ENCODE measurements at regions of chr1 and their contacts with region 1.

Region 1: DNA sequence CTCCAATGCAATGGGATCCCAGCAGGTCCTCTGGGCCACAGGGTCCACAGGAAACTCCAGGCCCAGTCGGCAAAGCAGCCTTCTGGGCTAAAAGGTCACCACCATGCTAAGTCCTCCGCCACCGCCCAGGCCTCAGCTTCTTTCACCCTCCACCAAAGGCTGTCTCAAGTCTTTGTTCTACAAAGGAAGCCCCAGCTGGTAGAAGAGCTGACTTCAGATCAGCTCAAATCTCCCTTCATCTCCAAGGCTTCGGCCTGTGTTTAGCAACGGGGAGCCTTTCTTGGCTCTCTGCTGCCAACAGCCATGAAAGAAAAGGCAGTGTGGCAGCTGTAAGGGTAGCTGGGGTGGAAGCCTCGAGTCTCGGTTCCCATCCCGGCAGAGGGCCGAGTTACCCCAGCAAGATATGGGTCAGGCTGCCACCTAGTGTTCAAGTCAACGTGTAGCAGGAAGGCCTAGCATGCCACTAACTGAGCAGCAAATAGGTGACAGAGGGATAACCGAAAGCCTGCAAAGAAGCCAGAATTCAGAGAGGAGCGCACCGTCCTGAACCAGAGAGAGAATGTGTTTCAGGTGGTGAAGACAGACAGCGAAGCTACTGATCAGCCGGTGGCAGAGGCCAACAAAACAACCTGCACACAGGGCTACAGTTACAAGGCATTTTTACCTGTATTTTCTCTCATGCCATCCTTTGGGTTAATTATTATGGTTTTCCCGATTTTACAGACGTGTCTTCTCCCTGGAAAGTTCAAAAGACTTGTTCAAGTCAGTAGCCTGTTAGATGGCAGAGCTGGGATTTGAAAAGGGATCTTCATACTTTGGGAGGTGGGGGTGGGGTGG is 26.8 kb upstream of the CRNN start:
- DNase-seq: peak; percentile 77
- H3K4me3 Mint-ChIP-seq: no peak overlapping the region
- H3K27ac Mint-ChIP-seq: no peak overlapping the region
- H3K4me1 Mint-ChIP-seq: no peaks in the 10 kb centered on the region
- H3K27me3 Mint-ChIP-seq: peaks cover 21% of the 10 kb centered on the region

Region 2: GRCh38 chr1:152347116-152347728 is 93.6 kb before region 1 on chr1:
- CTCF ChIA-PET with region 1: interaction called, 10 read pairs
- POLR2A ChIA-PET with region 1: no interaction called
- intact Hi-C with region 1: no loop called
- DNase-seq: peak; percentile 46
- H3K4me3 Mint-ChIP-seq: no peak overlapping the region
- H3K27ac Mint-ChIP-seq: no peak overlapping the region
- H3K4me1 Mint-ChIP-seq: peaks cover 3% of the 10 kb centered on the region
- H3K27me3 Mint-ChIP-seq: peaks cover 3% of the 10 kb centered on the region

Region 3: DNA sequence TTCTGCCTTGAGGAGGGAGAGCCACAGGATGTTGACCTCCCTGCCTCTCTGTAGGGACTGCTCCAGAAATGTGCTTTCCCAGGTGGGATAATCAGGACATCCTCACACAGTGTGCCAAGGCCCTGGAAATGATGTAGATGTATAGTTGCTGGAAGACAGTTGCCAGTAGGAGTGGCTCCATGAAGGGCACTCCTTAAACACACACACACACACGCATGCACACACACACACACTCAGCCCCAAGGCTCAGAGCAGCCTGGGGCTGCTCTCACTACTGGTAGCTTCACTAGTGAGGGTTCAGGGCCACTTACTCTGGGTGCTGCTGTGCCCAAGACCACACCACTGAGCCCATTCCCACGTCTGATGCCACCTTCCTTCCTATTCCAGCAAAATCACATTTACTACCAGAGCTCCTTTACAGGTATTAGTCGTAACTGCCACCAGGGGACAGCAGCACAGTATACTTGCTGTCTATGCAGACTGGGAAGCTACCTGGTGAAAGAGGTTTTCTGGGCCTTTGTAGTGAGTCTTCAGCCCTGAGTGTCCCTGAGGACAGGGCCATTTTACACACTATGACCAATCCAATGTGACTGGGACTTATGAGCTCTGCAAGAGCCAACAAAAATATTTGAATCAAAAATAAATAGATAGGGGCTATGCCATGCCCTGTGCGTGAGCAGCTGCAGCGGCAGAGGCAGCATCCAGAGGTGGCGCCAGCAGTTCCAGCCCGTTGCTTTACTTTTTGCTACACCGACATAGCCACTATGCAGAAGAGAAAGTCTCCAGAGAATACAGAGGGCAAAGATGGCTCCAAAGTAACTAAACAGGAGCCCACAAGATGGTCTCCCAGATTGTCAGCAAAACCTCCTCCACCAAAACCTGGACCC is 41.8 kb before region 1 on chr1:
- CTCF ChIA-PET with region 1: interaction called, 20 read pairs
- POLR2A ChIA-PET with region 1: no interaction called
- intact Hi-C with region 1: no loop called
- DNase-seq: peak; percentile 11
- H3K4me3 Mint-ChIP-seq: no peak overlapping the region
- H3K27ac Mint-ChIP-seq: no peak overlapping the region
- H3K4me1 Mint-ChIP-seq: peaks cover 18% of the 10 kb centered on the region
- H3K27me3 Mint-ChIP-seq: peaks cover 3% of the 10 kb centered on the region

Region 4: GRCh38 chr1:152487871-152488270 is 47.0 kb after region 1 on chr1:
- CTCF ChIA-PET with region 1: no interaction called
- POLR2A ChIA-PET with region 1: no interaction called
- intact Hi-C with region 1: no loop called
- DNase-seq: no peak
- H3K4me3 Mint-ChIP-seq: no peak overlapping the region
- H3K27ac Mint-ChIP-seq: no peak overlapping the region
- H3K4me1 Mint-ChIP-seq: peaks cover 4% of the 10 kb centered on the region
- H3K27me3 Mint-ChIP-seq: peaks cover 7% of the 10 kb centered on the region

Region 5: GRCh38 chr1:152878042-152878441 is 437.2 kb after region 1 on chr1 and contains the start of gene SMCP:
- CTCF ChIA-PET with region 1: no interaction called
- POLR2A ChIA-PET with region 1: no interaction called
- intact Hi-C with region 1: no loop called
- DNase-seq: peak; percentile 49
- H3K4me3 Mint-ChIP-seq: no peak within 1 kb of the TSS
- H3K27ac Mint-ChIP-seq: no peak within 1 kb of the TSS
- H3K4me1 Mint-ChIP-seq: peaks cover 6% of the 10 kb centered on the region
- H3K27me3 Mint-ChIP-seq: peaks cover 6% of the 10 kb centered on the region
- total RNA-seq, gene SMCP: not detected